ENCODE measurements at regions of chr3 and their contacts with region 1.

Region 1: DNA sequence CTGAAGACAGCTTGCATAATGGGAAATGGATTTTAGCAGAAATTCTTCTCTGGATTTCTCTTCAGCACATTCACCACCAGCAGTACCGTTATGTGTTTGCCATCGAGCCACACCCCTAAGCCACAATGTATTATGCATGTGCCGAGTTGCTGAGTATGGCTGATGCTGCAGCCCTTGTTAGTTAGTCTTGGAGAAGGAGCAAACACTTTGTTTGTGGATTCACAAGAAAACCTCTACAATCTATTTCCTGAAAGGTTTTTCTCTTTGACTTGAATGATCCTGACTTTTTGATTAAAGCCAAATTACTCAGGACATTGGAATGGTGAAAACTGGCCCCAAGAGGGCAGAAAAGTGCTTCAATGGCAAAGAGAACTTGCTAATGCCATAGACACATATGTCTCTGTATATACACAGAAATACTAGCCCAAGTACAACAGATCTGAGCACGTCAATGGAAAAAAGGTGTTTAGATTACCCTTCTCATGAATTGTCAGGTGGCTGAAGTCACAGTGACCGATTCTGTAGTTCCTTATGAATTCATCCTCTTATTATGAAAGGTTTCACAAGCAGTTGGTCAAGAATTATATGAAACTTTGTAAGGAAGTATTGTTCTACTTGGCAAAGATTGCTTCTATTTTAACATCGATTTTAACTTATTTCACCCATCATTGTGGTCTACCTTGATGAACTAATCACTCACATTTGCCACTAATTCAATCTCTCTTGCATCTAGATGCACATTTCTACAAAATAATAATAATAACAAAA is 103.0 kb downstream of the P3H2 start:
- DNase-seq: no peak

Region 2: DNA sequence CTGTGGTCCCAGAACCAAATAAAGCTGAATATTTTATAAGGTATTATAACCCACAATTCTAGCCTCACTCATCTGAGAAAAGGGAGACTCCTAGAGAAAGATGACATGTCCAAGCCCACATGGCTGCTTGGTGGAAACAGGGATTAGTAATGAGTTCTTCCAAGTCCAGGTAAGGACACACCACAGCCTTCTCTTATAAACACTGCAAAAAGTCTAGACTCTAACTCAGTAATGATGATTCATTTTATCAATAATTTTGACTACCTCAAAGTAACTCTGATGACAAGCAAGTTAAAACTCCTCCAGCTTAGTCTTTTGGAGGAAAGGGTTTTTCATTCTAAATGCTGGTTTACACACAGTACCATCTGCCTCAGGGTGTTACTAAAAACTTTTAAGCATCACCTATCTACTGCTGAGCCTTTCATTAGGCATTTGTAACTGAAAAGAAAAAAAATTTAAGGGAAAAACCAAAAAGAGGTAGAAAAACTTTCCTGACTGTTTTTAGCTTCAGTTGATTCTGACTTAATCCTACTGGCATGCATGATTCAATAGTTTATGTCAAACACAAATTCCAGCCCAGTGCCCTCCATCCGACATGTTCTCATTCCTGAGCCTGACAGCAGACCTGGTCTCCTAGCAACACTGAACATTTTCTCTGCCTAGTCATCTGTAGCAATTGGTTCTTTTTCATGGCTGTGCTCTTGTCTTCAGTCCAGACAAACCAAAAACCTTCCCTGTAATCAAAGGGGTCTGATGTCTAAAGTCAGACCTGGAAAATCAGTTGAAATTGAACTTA is 59.1 kb after region 1 on chr3:
- intact Hi-C with region 1: loop called (anchors 5 kb)
- DNase-seq: no peak

Region 3: DNA sequence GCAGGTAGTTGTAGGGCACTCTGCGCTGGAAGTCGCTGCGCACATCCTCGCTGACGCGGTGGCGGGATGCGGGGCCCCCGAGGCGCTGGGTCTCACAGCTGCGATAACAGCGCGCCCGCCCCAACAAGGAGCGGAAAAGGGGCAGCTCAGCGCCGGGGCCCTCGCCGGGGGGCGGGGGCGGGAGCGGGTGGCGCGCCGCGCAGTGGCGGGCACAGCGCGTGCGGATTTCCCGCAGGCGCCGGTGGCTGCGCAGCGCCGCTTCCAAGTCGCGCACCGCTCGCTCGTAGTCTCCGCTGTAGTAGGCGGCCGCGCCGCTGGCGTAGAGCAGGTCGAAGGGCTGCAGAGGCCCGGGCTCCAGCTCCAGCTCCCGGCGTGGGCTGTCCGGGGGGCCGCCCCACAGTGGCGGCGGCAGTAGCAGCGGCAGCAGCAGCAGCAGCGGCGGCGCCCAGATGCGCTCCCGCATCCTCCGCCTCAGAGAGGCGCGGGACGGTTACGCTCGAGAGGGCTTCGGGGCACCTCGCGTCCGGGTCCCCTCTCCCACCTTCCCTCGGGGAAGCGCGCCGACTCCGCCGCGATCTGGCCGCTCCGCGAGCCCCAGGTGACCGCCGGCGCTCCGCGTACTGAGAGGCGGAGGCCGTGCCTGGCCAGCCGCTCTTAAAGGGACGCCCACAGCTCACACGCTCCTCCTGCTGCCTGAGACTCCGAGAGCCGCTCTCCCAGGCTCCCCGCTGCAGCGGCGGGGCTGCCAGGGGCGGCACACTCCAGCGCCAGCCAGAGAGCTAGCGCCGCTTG is 102.8 kb after region 1 on chr3 and contains the start of gene P3H2:
- intact Hi-C with region 1: loop called (anchors 10 kb)
- DNase-seq: peak; percentile 86
- total RNA-seq, gene P3H2: 17.7 TPM

Region 4: DNA sequence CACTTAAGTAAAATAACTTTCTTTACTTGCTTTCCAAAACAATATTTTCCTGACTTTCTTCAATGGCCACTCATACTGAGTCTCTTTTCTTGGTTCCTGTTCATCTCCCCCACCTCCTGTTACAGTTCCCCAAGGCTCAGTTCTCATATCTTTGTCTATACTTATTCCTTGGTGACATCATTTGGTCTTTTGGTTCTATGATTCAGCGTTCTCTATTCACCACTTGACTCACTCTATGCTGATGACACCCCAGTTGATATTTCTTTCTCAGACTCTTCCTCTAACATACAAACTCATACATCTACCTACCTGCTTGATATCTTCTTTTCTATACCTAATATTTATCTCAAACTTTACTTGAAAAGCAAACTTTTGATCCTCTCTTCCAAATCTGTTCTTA is 188.0 kb after region 1 on chr3:
- intact Hi-C with region 1: loop called (anchors 2 kb)
- DNase-seq: no peak